ENCODE measurements at regions of chr2 and their contacts with region 1.

Region 1: GRCh38 chr2:55452879-55453278 is 33.2 kb upstream of the CCDC88A start:
- DNase-seq: no peak
- ATAC-seq: no peak
- H3K4me3 ChIP-seq: no peak overlapping the region
- H3K27ac ChIP-seq: no peak overlapping the region
- H3K4me1 ChIP-seq: no peaks in the 10 kb centered on the region
- H3K27me3 ChIP-seq: peaks cover 3% of the 10 kb centered on the region; the same call in 1 of the 2 replicates
- CTCF ChIP-seq: no peak
- POLR2A ChIP-seq: no peak
- RAD21 ChIP-seq: no peak

Region 2: DNA sequence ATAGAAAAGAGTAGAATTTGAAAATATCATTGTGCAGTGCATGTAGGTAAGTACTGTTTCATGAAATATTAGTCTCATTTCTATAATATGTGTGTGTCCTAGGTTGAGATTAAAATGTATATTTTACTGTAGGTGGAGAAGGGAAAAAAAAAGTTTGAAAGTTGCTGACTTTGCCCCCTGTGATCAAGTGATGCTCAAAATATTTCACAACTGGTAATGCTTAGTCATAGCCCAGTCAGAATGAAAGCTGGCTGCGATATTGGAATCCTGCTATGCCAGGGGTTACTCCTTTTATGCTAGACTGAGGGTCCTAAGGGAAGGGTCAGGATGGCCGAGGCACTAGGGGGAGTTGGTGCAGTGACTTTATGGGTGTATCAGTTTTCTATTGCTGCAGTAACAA is 47.1 kb after region 1 on chr2:
- CTCF ChIA-PET with region 1: interaction called, 11 read pairs
- POLR2A ChIA-PET with region 1: no interaction called
- dilution Hi-C with region 1: no loop called
- in situ Hi-C with region 1: no loop called
- intact Hi-C with region 1: no loop called
- DNase-seq: peak; percentile 74
- ATAC-seq: peak; percentile 93
- H3K4me3 ChIP-seq: no peak overlapping the region
- H3K27ac ChIP-seq: no peak overlapping the region
- H3K4me1 ChIP-seq: peaks cover 2% of the 10 kb centered on the region; the same call in 1 of the 2 replicates
- H3K27me3 ChIP-seq: no peaks in the 10 kb centered on the region
- CTCF ChIP-seq: no peak
- POLR2A ChIP-seq: no peak
- RAD21 ChIP-seq: no peak

Region 3: GRCh38 chr2:55617175-55618024 is 164.5 kb after region 1 on chr2 and contains the start of gene PPP4R3B:
- CTCF ChIA-PET with region 1: no interaction called
- POLR2A ChIA-PET with region 1: no interaction called
- dilution Hi-C with region 1: no loop called
- in situ Hi-C with region 1: no loop called
- intact Hi-C with region 1: no loop called
- DNase-seq: peak; percentile 100
- ATAC-seq: peak; percentile 93
- H3K4me3 ChIP-seq: peak within 1 kb of the TSS; percentile 94
- H3K27ac ChIP-seq: peak within 1 kb of the TSS; percentile 82
- H3K4me1 ChIP-seq: peaks cover 3% of the 10 kb centered on the region
- H3K27me3 ChIP-seq: no peaks in the 10 kb centered on the region
- CTCF ChIP-seq: peak; percentile 37
- POLR2A ChIP-seq: peak; percentile 89
- RAD21 ChIP-seq: no peak
- total RNA-seq, gene PPP4R3B: 23.7 and 44.7 TPM in 2 replicates

Measured in IMR-90 (cell line).